WTC11 (cell line): ENCODE measurements at regions of chr11 and their contacts with region 1.

Region 1: GRCh38 chr11:59053387-59053786 is 32.7 kb upstream of the GLYATL1B start:
- DNase-seq: peak; percentile 90
- ATAC-seq: peak; percentile 10; the same call in 1 of the 2 replicates
- H3K4me3 Mint-ChIP-seq: no peak overlapping the region
- H3K27ac Mint-ChIP-seq: no peak overlapping the region
- H3K4me1 Mint-ChIP-seq: peaks cover 74% of the 10 kb centered on the region
- H3K27me3 Mint-ChIP-seq: peaks cover 3% of the 10 kb centered on the region; the same call in 1 of the 2 replicates
- CTCF ChIP-seq: peak; percentile 73

Region 2: DNA sequence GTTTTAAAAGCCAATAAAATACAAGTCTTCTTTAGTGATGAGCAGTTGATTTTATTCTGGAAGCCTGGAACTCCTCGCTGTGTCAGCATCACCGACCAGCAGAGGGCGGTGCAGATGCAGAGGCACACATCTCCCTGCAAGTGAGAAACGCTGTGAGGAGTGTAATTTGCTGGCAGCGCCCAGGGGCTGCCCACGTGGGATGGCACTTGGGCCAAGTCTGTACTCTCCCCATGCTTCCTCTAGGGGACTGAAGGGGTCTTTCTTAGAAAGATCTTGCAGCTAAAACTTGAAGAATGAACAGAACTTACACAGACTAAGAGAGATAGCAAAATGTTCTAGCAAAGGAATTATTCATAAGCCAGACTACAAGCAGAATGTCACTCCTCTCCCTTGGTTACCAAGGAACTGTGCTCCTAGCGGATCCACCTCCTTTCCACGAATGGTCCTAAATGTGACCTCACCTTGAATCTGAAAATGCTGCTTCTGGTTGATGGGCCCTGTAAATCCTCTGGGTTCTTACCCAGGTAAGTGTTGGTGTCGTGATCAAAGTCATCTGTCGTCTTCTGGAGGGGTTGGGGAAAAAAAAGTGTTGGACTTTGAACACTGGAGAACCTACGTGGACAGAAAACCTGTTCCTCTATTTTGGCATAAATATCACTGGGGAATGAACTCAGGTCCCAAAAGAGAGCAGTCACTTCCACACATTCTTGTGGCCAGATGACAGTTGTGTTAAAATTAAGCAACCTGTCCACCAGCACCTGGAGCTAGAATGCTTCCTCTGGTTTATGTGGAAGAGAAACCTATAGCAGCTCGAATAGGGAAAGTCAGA is 399.1 kb before region 1 on chr11:
- CTCF ChIA-PET with region 1: interaction called, 26 read pairs
- POLR2A ChIA-PET with region 1: no interaction called
- DNase-seq: peak; percentile 86
- ATAC-seq: peak; percentile 97
- H3K4me3 Mint-ChIP-seq: no peak overlapping the region
- H3K27ac Mint-ChIP-seq: no peak overlapping the region
- H3K4me1 Mint-ChIP-seq: peaks cover 26% of the 10 kb centered on the region
- H3K27me3 Mint-ChIP-seq: no peaks in the 10 kb centered on the region; the same call in 1 of the 2 replicates
- CTCF ChIP-seq: peak; percentile 73

Region 3: GRCh38 chr11:58958500-58958899 is 94.9 kb before region 1 on chr11:
- CTCF ChIA-PET with region 1: interaction called, 93 read pairs
- POLR2A ChIA-PET with region 1: interaction called, 5 read pairs
- DNase-seq: peak; percentile 57
- ATAC-seq: no peak
- H3K4me3 Mint-ChIP-seq: no peak overlapping the region
- H3K27ac Mint-ChIP-seq: no peak overlapping the region
- H3K4me1 Mint-ChIP-seq: peaks cover 49% of the 10 kb centered on the region
- H3K27me3 Mint-ChIP-seq: peaks cover 15% of the 10 kb centered on the region
- CTCF ChIP-seq: peak; percentile 45

Region 4: DNA sequence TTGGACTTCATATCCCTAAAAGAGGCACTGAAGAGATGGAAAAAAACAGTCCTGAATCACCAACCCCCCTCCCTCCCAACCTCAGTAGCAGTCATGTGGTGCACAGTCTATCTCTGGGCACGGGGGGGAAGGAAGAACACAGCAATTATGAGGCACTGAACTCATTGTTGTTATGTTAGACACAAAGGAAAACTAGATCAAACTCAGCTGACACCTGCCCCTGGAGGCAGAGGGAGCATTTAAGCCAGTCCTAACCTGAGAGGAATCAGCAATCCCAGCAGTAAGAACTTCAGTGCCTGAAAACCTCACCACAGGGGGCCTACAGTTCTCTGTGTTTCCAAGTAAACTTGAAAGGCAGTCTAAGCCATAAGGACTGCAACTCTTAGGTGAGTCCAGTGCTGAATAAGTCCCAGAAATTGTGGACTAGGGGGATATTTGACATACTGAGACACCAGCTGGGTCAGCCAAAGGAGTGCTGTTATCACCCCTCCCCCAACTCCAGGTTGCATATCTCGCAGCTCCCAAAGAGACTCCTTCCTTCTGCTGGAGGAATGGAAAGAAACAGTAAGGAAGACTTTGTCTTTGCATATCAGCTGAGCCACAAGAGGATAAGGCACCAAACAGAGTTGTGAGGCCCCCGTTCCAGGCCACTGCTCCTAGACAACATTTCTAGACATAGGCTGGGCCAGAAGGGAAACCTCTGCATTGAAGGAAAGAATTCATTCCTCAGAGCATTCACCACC is 41.6 kb before region 1 on chr11:
- CTCF ChIA-PET with region 1: interaction called, 18 read pairs
- POLR2A ChIA-PET with region 1: no interaction called
- DNase-seq: peak; percentile 70
- ATAC-seq: peak; percentile 95
- H3K4me3 Mint-ChIP-seq: no peak overlapping the region
- H3K27ac Mint-ChIP-seq: peak overlapping the region; percentile 29; the same call in 1 of the 2 replicates
- H3K4me1 Mint-ChIP-seq: peaks cover 23% of the 10 kb centered on the region
- H3K27me3 Mint-ChIP-seq: no peaks in the 10 kb centered on the region; the same call in 1 of the 2 replicates
- CTCF ChIP-seq: no peak

Region 5: DNA sequence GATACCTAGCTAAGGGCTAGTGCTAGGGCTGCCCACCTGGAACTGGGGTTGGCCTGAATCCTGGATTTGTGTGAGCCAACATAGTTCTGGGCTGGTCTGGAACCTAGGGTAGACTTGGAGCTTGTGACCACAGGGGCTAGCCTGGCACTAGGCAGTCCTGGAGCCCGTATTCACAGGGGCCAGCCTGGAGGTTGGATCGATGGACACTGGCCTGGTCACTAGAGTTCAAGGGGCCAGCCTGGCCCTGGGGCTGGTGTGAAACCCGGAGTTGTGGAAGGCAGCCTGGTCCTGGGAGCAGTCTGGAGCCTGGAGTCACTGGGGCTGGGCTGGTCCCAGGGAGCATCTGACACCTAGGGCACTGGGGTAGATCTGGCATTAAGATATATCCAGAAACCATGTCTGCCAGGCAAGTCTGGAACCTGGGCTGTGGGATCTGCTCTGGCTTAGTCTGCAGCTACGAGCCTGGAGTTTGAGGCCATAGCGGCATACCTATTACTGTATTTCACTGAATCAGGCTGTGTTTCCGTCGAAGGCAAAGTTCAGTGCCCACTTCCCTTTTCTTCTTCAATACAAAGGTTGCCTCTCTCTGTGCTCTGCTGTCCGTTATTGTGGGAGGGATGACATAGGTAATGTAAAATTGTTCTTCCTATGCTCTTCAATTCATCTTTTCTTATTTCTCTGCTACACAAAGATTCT is 23.6 kb after region 1 on chr11:
- CTCF ChIA-PET with region 1: interaction called, 18 read pairs
- POLR2A ChIA-PET with region 1: no interaction called
- DNase-seq: no peak
- ATAC-seq: no peak
- H3K4me3 Mint-ChIP-seq: no peak overlapping the region
- H3K27ac Mint-ChIP-seq: no peak overlapping the region
- H3K4me1 Mint-ChIP-seq: peaks cover 9% of the 10 kb centered on the region
- H3K27me3 Mint-ChIP-seq: peaks cover 3% of the 10 kb centered on the region
- CTCF ChIP-seq: no peak

Region 6: GRCh38 chr11:59135648-59136461 is 82.5 kb after region 1 on chr11:
- CTCF ChIA-PET with region 1: interaction called, 92 read pairs
- POLR2A ChIA-PET with region 1: no interaction called
- DNase-seq: peak; percentile 93
- ATAC-seq: peak; percentile 100
- H3K4me3 Mint-ChIP-seq: peak overlapping the region; percentile 59
- H3K27ac Mint-ChIP-seq: no peak overlapping the region
- H3K4me1 Mint-ChIP-seq: peaks cover 2% of the 10 kb centered on the region; the same call in 1 of the 2 replicates
- H3K27me3 Mint-ChIP-seq: peaks cover 6% of the 10 kb centered on the region; the same call in 1 of the 2 replicates
- CTCF ChIP-seq: peak; percentile 92

Region 7: GRCh38 chr11:59171508-59172322 is 118.3 kb after region 1 on chr11 and contains the start of gene DTX4:
- CTCF ChIA-PET with region 1: interaction called, 18 read pairs
- POLR2A ChIA-PET with region 1: interaction called, 3 read pairs
- DNase-seq: peak; percentile 96
- ATAC-seq: peak; percentile 58
- H3K4me3 Mint-ChIP-seq: peak within 1 kb of the TSS; percentile 90
- H3K27ac Mint-ChIP-seq: no peak within 1 kb of the TSS
- H3K4me1 Mint-ChIP-seq: peaks cover 26% of the 10 kb centered on the region
- H3K27me3 Mint-ChIP-seq: peaks cover 4% of the 10 kb centered on the region; the same call in 1 of the 2 replicates
- CTCF ChIP-seq: peak; percentile 83
- total RNA-seq, gene DTX4: 12.3 to 15.5 TPM (median 12.8 TPM) in 3 replicates